ENCODE measurements at regions of chr17 and their contacts with region 1.

Region 1: GRCh38 chr17:63741221-63742049 is at the start of gene STRADA:
- DNase-seq: peak; percentile 98 to 100 (median 99)
- ATAC-seq: peak; percentile 88
- H3K4me3 ChIP-seq: peak within 1 kb of the TSS; percentile 95
- H3K4me3 Mint-ChIP-seq: peak within 1 kb of the TSS; percentile 93
- H3K27ac ChIP-seq: peak within 1 kb of the TSS; percentile 94
- H3K27ac Mint-ChIP-seq: peak within 1 kb of the TSS; percentile 91
- H3K4me1 ChIP-seq: peaks cover 33% of the 10 kb centered on the region
- H3K4me1 Mint-ChIP-seq: peaks cover 24% of the 10 kb centered on the region
- H3K27me3 ChIP-seq: no peaks in the 10 kb centered on the region
- H3K27me3 Mint-ChIP-seq: no peaks in the 10 kb centered on the region
- CTCF ChIP-seq: no peak
- total RNA-seq, gene STRADA: 50.9 to 51.0 TPM

Region 2: GRCh38 chr17:63707151-63707550 is 34.3 kb before region 1 on chr17:
- CTCF ChIA-PET with region 1: interaction called, 12 read pairs
- POLR2A ChIA-PET with region 1: interaction called, 212 read pairs
- intact Hi-C with region 1: no loop called
- DNase-seq: peak in 6 of 14 experiments; percentile 28 to 79 (median 54)
- ATAC-seq: peak; percentile 57
- H3K4me3 ChIP-seq: peak overlapping the region; percentile 39
- H3K4me3 Mint-ChIP-seq: peak overlapping the region; percentile 75
- H3K27ac ChIP-seq: peak overlapping the region; percentile 69 to 70
- H3K27ac Mint-ChIP-seq: peak overlapping the region; percentile 100
- H3K4me1 ChIP-seq: peaks cover 86% of the 10 kb centered on the region
- H3K4me1 Mint-ChIP-seq: peaks cover 83% of the 10 kb centered on the region
- H3K27me3 ChIP-seq: no peaks in the 10 kb centered on the region
- H3K27me3 Mint-ChIP-seq: no peaks in the 10 kb centered on the region
- CTCF ChIP-seq: no peak

Region 3: DNA sequence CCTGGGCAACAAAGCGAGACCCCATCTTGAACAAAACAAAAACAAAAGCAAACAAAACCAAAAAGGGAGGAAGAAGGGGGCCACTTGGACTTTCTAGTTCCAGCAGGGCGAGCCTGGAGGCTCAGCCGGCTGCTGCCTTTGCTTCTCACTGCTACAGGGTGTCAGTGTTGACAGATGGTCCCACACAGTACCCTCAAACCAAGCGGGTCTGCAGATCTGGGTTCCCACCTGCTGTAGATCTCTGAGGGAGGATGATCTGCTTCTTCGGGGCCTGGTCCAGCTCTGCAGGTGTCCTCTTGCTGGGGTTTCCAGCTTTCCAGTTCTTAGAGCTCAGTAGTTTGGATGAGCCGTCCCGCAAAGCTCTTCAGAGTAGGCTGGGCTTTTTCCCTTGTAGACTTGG is 162.9 kb after region 1 on chr17:
- CTCF ChIA-PET with region 1: no interaction called
- POLR2A ChIA-PET with region 1: no interaction called
- intact Hi-C with region 1: no loop called
- DNase-seq: no peak
- ATAC-seq: no peak
- H3K4me3 ChIP-seq: no peak overlapping the region
- H3K4me3 Mint-ChIP-seq: no peak overlapping the region
- H3K27ac ChIP-seq: no peak overlapping the region
- H3K27ac Mint-ChIP-seq: no peak overlapping the region
- H3K4me1 ChIP-seq: peaks cover 2% of the 10 kb centered on the region
- H3K4me1 Mint-ChIP-seq: peaks cover 4% of the 10 kb centered on the region
- H3K27me3 ChIP-seq: no peaks in the 10 kb centered on the region
- H3K27me3 Mint-ChIP-seq: no peaks in the 10 kb centered on the region
- CTCF ChIP-seq: no peak